Calu3 (cell line): ENCODE measurements at regions of chr2 and their contacts with region 1.

Region 1: DNA sequence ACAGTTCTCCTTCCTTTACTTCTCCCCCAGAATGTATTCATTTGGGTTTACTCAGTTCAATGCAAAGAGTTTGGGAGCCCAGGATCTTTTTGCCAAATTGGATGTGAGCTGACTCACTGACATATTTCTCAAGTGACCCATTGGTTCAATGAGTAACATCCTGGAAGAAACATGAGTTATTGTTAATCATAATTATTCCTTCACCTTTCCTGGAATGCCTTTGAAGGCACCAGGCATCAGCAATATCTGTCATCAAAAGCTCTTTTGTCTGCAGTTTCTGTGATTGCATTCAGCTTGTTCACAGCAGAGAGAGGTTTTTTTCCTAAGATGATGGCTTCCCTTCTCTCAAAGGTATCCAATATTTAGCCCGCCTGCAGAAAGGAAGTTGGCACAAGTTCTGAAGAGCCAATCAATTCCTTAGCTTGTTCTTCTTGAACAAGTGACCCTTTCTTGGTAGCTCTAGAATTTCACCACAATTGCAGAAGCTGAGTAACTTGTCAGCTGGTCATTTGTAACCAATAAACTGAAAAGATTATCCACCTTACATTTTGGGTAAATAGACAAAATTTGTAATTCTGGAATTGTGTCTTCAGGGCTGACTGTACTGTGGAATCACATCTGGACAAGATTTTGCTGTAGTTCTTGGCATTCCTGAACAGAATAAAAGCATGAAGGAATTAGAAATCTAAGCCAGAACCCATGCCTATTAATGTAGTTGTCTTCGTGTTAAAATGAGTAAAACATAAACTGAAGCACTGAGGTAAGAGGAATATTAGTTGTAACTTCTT is 72.2 kb upstream of the TMEM17 start:
- DNase-seq: peak; percentile 72
- H3K4me3 Mint-ChIP-seq: peak overlapping the region; percentile 61
- H3K27ac Mint-ChIP-seq: peak overlapping the region; percentile 100
- H3K4me1 Mint-ChIP-seq: peaks cover 62% of the 10 kb centered on the region
- H3K27me3 Mint-ChIP-seq: no peaks in the 10 kb centered on the region
- CTCF ChIP-seq: no peak

Region 2: DNA sequence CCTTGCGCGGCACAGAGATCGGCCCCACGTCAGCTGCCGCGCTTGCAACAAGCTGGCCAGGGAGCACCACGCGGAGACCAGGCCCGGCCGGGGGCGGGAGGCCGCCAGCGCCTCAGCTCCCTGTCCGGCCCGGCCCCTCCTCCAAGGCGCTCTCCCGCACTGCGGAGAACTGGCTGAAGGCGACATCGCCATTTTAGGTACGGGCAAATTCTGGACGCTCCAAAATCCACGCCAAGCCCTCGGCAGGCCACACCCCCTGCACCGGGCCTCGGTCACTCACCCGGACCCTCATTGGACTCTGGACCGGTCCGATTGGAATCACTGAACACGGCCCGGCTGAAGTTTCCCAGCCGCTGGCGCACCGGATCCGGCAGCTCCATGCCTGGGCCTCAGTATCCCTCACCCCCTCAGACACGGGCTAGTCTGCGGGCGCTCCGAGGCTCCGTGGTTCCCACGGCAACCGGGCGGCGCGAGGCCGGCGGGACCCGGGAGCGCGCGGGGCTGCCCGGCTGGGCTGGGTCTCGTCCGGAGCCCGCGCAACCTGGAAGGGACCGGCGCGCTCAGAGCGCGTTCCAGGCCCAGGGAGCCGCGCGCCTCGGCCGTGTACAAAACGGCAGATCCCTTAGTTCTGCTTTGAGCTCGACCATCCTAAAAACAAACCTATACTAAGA is 72.3 kb before region 1 on chr2 and contains the start of gene TMEM17:
- CTCF ChIA-PET with region 1: no interaction called
- intact Hi-C with region 1: loop called (anchors 5 kb)
- DNase-seq: peak; percentile 89
- H3K4me3 Mint-ChIP-seq: peak within 1 kb of the TSS; percentile 72
- H3K27ac Mint-ChIP-seq: peak within 1 kb of the TSS; percentile 73
- H3K4me1 Mint-ChIP-seq: peaks cover 23% of the 10 kb centered on the region
- H3K27me3 Mint-ChIP-seq: no peaks in the 10 kb centered on the region
- CTCF ChIP-seq: no peak
- total RNA-seq, gene TMEM17: 3.3 and 3.6 TPM in 2 replicates

Region 3: GRCh38 chr2:62526531-62527381 is 51.4 kb before region 1 on chr2:
- CTCF ChIA-PET with region 1: interaction called, 5 read pairs
- intact Hi-C with region 1: loop called (anchors 5 kb)
- DNase-seq: peak; percentile 13
- H3K4me3 Mint-ChIP-seq: peak overlapping the region; percentile 28
- H3K27ac Mint-ChIP-seq: peak overlapping the region; percentile 92
- H3K4me1 Mint-ChIP-seq: peaks cover 25% of the 10 kb centered on the region
- H3K27me3 Mint-ChIP-seq: no peaks in the 10 kb centered on the region
- CTCF ChIP-seq: no peak

Region 4: GRCh38 chr2:62654423-62654791 is 76.2 kb after region 1 on chr2:
- CTCF ChIA-PET with region 1: interaction called, 6 read pairs
- intact Hi-C with region 1: loop called (anchors 2 kb)
- DNase-seq: peak; percentile 44
- H3K4me3 Mint-ChIP-seq: peak overlapping the region; percentile 38
- H3K27ac Mint-ChIP-seq: peak overlapping the region; percentile 53
- H3K4me1 Mint-ChIP-seq: peaks cover 21% of the 10 kb centered on the region
- H3K27me3 Mint-ChIP-seq: no peaks in the 10 kb centered on the region
- CTCF ChIP-seq: no peak

Region 5: GRCh38 chr2:62705007-62705829 is 127.0 kb after region 1 on chr2 and contains the start of gene EHBP1:
- CTCF ChIA-PET with region 1: interaction called, 6 read pairs
- intact Hi-C with region 1: loop called (anchors 2 kb)
- DNase-seq: peak; percentile 99
- H3K4me3 Mint-ChIP-seq: peak within 1 kb of the TSS; percentile 87
- H3K27ac Mint-ChIP-seq: peak within 1 kb of the TSS; percentile 69
- H3K4me1 Mint-ChIP-seq: peaks cover 35% of the 10 kb centered on the region
- H3K27me3 Mint-ChIP-seq: no peaks in the 10 kb centered on the region
- CTCF ChIP-seq: no peak
- total RNA-seq, gene EHBP1: 82.9 and 89.2 TPM in 2 replicates

Region 6: GRCh38 chr2:62724886-62725711 is 146.9 kb after region 1 on chr2:
- CTCF ChIA-PET with region 1: no interaction called
- intact Hi-C with region 1: loop called (anchors 5 kb)
- DNase-seq: peak; percentile 78
- H3K4me3 Mint-ChIP-seq: no peak overlapping the region
- H3K27ac Mint-ChIP-seq: peak overlapping the region; percentile 35
- H3K4me1 Mint-ChIP-seq: peaks cover 47% of the 10 kb centered on the region
- H3K27me3 Mint-ChIP-seq: no peaks in the 10 kb centered on the region
- CTCF ChIP-seq: peak; percentile 63

Region 7: GRCh38 chr2:62774555-62775366 is 196.6 kb after region 1 on chr2:
- CTCF ChIA-PET with region 1: no interaction called
- intact Hi-C with region 1: loop called (anchors 2 kb)
- DNase-seq: peak; percentile 45
- H3K4me3 Mint-ChIP-seq: no peak overlapping the region
- H3K27ac Mint-ChIP-seq: peak overlapping the region; percentile 65
- H3K4me1 Mint-ChIP-seq: peaks cover 20% of the 10 kb centered on the region
- H3K27me3 Mint-ChIP-seq: no peaks in the 10 kb centered on the region
- CTCF ChIP-seq: peak; percentile 58